Activated naive CD8-positive, alpha-beta T cell treated with anti-CD3 and anti-CD28 coated beads, Interleukin-2, amount 10 ng/mL, durations not matched to agents 7 days and 5 days (primary cell): ENCODE measurements at regions of chr1 and their contacts with region 1.

Region 1: GRCh38 chr1:11907275-11908094 is 18.7 kb downstream of the KIAA2013 start:
- DNase-seq: peak; percentile 87
- ATAC-seq: peak; percentile 49
- H3K4me3 Mint-ChIP-seq: peak overlapping the region; percentile 92
- H3K27ac Mint-ChIP-seq: peak overlapping the region; percentile 100
- H3K4me1 Mint-ChIP-seq: peaks cover 38% of the 10 kb centered on the region
- H3K27me3 Mint-ChIP-seq: peaks cover 19% of the 10 kb centered on the region

Region 2: DNA sequence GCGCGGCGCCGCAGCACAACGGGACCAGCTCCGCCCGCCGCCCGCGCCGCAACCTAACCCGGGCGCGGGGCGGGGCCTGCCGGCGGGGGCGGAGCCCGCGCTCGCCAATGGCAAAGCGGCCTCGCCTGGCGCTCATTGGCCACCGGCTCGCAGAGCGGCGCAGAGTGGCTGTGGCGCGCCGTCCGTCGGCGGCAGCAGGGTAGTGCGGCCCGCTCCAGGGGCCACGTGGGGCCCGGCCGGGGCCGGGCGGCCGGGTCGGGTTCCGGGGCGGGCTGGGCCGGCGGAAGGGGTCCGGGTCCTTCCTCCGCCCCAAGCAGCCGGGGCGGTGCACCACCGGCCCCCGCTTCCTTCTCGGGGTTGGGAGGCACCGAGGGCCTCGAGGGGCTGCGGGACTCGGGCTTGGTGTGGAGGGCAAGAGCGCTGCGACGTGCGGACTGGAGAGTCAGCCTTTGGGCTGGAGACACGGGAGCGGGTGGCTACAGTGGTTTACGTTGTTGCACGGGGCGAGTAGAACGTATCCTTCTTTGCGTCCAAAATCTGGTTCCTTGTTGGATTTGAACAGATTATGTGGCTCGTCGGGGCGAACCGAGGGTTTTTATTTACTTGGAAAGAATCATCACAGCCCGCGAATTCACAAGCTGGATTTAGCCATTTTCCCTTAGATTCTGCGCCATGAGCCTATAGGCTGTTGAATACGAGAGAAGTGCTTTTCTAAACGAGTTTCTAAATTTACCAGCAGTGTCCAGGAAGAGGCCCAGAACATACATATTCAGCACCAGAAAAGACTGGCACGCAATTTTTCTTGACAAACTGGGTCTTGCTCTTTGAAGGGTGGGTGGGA is 847.3 kb before region 1 on chr1 and contains the start of gene SRM:
- POLR2A ChIA-PET with region 1: interaction called, 14 read pairs
- DNase-seq: peak; percentile 97
- ATAC-seq: peak; percentile 95
- H3K4me3 Mint-ChIP-seq: peak within 1 kb of the TSS; percentile 91
- H3K27ac Mint-ChIP-seq: peak within 1 kb of the TSS; percentile 94
- H3K4me1 Mint-ChIP-seq: peaks cover 33% of the 10 kb centered on the region
- H3K27me3 Mint-ChIP-seq: no peaks in the 10 kb centered on the region
- total RNA-seq, gene SRM: 72.3 to 85.0 TPM

Region 3: DNA sequence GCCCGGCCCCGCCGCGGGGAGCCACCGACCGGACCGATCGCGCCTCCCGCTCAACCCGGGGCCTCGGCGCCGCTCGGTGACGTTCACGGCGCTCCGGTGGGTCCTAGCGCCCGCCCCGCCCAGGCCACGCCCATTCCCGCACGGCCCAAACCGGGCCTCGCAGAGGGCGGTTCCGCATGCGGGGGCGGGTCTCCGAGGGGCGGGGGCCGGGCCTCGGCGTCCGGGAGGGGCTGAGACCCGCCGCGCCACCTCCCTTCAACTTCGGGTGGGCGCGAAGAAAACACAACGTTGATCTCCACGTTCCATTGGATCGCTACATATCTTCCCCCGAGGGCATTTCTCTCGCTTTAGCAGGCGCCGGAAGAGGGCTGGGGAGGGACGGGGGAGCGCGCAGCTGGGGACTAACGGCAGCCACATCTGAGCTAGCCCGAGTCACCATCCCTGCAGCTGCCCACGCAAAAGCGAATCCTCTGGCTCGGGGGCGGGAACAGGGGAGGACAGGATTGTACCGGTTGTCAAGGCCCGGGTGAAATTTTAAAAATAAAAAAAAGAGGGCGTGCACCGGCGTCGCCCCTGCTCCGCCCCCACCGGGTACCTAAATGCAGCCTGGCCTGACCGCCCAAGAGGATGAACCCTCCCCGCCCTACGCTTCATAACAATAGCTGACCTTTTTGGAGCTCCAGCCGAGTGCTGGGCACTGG is 226.3 kb before region 1 on chr1 and contains the start of gene MAD2L2:
- POLR2A ChIA-PET with region 1: interaction called, 14 read pairs
- DNase-seq: peak; percentile 97
- ATAC-seq: peak; percentile 82
- H3K4me3 Mint-ChIP-seq: peak within 1 kb of the TSS; percentile 92
- H3K27ac Mint-ChIP-seq: peak within 1 kb of the TSS; percentile 89
- H3K4me1 Mint-ChIP-seq: peaks cover 15% of the 10 kb centered on the region
- H3K27me3 Mint-ChIP-seq: peaks cover 16% of the 10 kb centered on the region
- total RNA-seq, gene MAD2L2: 95.4 to 103 TPM

Region 4: GRCh38 chr1:11838349-11839272 is 68.9 kb before region 1 on chr1:
- POLR2A ChIA-PET with region 1: interaction called, 84 read pairs
- DNase-seq: peak; percentile 82
- ATAC-seq: peak; percentile 95
- H3K4me3 Mint-ChIP-seq: no peak overlapping the region
- H3K27ac Mint-ChIP-seq: no peak overlapping the region
- H3K4me1 Mint-ChIP-seq: peaks cover 8% of the 10 kb centered on the region
- H3K27me3 Mint-ChIP-seq: no peaks in the 10 kb centered on the region

Region 5: DNA sequence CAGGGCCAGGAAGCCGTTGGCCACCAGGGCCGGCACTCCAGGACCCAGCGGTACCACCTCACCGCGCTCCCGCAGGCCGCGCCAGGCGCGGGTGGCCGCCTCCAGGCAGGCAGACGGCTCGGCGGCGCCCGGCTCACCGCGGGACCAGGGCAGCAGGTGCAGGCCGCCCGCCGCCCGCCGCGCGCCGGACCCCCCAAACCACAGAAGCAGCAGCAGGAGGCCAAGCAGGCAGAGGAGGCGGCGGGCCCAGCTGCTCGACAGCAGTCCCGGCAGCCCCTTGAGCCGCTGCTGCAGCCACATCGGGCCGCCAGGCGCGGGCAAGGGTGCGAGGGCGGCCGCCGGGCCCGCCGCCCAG is 18.4 kb after region 1 on chr1:
- POLR2A ChIA-PET with region 1: interaction called, 165 read pairs
- DNase-seq: no peak
- ATAC-seq: peak; percentile 29
- H3K4me3 Mint-ChIP-seq: no peak overlapping the region
- H3K27ac Mint-ChIP-seq: no peak overlapping the region
- H3K4me1 Mint-ChIP-seq: peaks cover 26% of the 10 kb centered on the region
- H3K27me3 Mint-ChIP-seq: no peaks in the 10 kb centered on the region

Region 6: GRCh38 chr1:12019858-12020509 is 112.5 kb after region 1 on chr1:
- POLR2A ChIA-PET with region 1: interaction called, 95 read pairs
- DNase-seq: no peak
- ATAC-seq: no peak
- H3K4me3 Mint-ChIP-seq: peak overlapping the region; percentile 85
- H3K27ac Mint-ChIP-seq: peak overlapping the region; percentile 74
- H3K4me1 Mint-ChIP-seq: peaks cover 7% of the 10 kb centered on the region
- H3K27me3 Mint-ChIP-seq: no peaks in the 10 kb centered on the region

Region 7: GRCh38 chr1:12067900-12068821 is 160.7 kb after region 1 on chr1:
- POLR2A ChIA-PET with region 1: interaction called, 11 read pairs
- DNase-seq: no peak
- ATAC-seq: peak; percentile 39
- H3K4me3 Mint-ChIP-seq: no peak overlapping the region
- H3K27ac Mint-ChIP-seq: no peak overlapping the region
- H3K4me1 Mint-ChIP-seq: peaks cover 36% of the 10 kb centered on the region
- H3K27me3 Mint-ChIP-seq: peaks cover 59% of the 10 kb centered on the region